Heart left ventricle (tissue), 16 donors: ENCODE measurements at regions of chr13 and their contacts with region 1.

Region 1: GRCh38 chr13:110715395-110716235 is 2.1 kb downstream of the ING1 start:
- DNase-seq: peak; percentile 98 to 99 (median 98)
- ATAC-seq: peak; percentile 76 to 84 (median 80)
- H3K4me3 ChIP-seq: peak overlapping the region; percentile 57 to 98 (median 95)
- H3K27ac ChIP-seq: peak overlapping the region; percentile 87 to 100 (median 100)
- H3K4me1 ChIP-seq: peaks cover 4 to 33% (median 27%) of the 10 kb centered on the region in 12 donors
- H3K27me3 ChIP-seq: no peaks in the 10 kb centered on the region
- CTCF ChIP-seq: peak in 7 of 12 donors; percentile 16 to 50 (median 30)
- POLR2A ChIP-seq: peak; percentile 54 to 80

Region 2: DNA sequence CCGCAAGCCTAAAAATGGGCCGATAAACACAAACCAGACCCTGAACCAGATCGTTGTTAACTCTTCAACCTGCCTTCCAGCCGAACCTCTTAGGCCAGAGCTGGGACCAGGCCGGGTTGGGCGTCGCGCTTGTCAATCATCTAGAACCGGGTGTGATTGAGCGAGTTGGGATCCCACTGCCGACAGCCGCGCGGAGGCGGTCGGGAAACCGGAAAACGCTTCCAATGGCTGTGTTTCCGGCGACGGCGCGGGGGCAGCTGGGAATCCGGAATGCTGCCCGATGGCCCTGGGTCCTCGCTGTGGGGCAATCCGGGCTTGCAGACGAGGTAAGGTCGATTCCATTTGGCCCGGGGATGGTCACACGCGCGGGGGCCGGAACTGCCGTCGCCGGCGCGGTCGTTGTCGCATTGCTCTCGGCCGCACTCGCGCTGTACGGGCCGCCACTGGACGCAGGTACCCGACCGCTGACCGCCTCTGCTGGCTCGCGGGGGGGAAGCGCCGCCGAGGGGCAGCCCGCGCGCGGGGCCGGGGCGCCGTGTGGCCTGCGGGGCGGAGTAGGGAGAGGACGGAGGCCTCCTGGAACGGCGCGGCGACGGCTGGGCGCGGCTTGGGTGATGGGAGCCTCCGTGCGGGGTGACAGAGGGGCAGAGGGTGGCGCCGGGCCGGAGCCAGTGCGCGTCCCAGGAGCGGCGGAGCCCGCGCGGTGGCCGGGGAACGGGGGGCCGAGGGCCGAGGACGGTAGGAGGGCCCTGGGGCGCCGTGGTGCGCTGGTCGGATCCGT is 100.1 kb before region 1 on chr13 and contains the start of gene NAXD:
- intact Hi-C with region 1: loop called in 3 of 10 experiments (anchors 5 kb)
- DNase-seq: peak; percentile 95 to 98 (median 96)
- ATAC-seq: peak; percentile 94 to 98 (median 95)
- H3K4me3 ChIP-seq: peak within 1 kb of the TSS; percentile 61 to 99 (median 84)
- H3K27ac ChIP-seq: peak within 1 kb of the TSS; percentile 74 to 99 (median 92)
- H3K4me1 ChIP-seq: peaks cover 0 to 47% (median 28%) of the 10 kb centered on the region in 12 donors
- H3K27me3 ChIP-seq: peaks cover 0 to 6% (median 0%) of the 10 kb centered on the region in 9 donors
- CTCF ChIP-seq: no peak
- POLR2A ChIP-seq: peak in 1 of 2 donors; percentile 77
- total RNA-seq, gene NAXD: 19.2 to 31.4 (median 25.0) TPM

Region 3: DNA sequence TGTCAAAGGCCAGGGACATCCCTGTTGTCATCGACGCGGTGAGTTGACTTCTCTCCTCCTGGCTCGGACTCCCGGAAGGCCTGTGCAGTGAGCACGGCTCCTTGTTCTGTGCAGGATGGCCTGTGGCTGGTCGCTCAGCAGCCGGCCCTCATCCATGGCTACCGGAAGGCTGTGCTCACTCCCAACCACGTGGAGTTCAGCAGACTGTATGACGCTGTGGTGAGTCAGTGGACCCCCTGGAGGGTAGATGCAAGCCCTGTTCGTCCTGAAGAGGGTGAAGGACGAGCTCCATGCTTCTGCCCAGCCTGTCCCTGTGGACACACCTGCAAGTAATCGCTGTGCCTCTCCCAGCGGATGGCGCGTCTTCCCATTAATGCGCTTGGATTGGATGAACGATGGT is 81.1 kb before region 1 on chr13:
- intact Hi-C with region 1: loop called in 1 of 10 experiments (anchors 5 kb)
- DNase-seq: no peak
- ATAC-seq: no peak
- H3K4me3 ChIP-seq: no peak overlapping the region
- H3K27ac ChIP-seq: no peak overlapping the region
- H3K4me1 ChIP-seq: peaks cover 0 to 13% (median 3%) of the 10 kb centered on the region in 12 donors
- H3K27me3 ChIP-seq: no peaks in the 10 kb centered on the region
- CTCF ChIP-seq: no peak
- POLR2A ChIP-seq: no peak

Region 4: GRCh38 chr13:110874508-110874960 is 158.9 kb after region 1 on chr13:
- intact Hi-C with region 1: loop called in 2 of 10 experiments (anchors 5 kb)
- DNase-seq: peak; percentile 89 to 92 (median 91)
- ATAC-seq: peak; percentile 64 to 85 (median 76)
- H3K4me3 ChIP-seq: peak overlapping the region in 11 of 12 donors; percentile 21 to 55 (median 44)
- H3K27ac ChIP-seq: peak overlapping the region in 2 of 12 donors; percentile 47
- H3K4me1 ChIP-seq: peaks cover 7 to 37% (median 23%) of the 10 kb centered on the region in 12 donors
- H3K27me3 ChIP-seq: no peaks in the 10 kb centered on the region
- CTCF ChIP-seq: no peak
- POLR2A ChIP-seq: no peak

Region 5: DNA sequence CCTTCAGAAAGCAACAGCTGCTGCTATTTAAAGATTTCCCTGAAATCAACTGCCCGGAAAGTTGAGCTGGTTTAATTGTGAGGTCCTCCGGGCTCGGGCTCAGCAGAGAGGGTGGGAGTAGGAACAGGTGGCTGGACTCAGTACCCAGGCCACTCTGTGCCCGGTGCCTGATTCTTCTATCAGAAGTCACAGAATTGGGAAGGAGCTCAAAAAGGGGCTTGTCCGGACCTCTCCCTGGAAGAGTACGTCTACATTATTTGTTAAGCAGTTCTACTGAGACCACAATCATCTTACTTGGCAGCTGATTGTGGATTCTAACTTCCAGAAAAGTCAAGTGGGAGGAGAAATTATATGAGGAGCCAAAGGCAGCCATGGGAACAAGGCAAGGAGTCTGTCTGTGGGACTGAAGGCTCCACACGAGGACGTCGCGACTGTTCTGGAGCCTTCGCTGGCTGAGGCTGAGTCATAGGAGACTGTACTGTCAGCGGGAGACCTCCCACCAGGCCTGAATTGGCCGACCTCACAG is 291.0 kb after region 1 on chr13:
- intact Hi-C with region 1: loop called in 1 of 10 experiments (anchors 2 kb)
- DNase-seq: peak; percentile 84 to 92 (median 88)
- ATAC-seq: peak; percentile 93 to 97 (median 96)
- H3K4me3 ChIP-seq: peak overlapping the region in 4 of 12 donors; percentile 1 to 15 (median 5)
- H3K27ac ChIP-seq: peak overlapping the region; percentile 70 to 93 (median 88)
- H3K4me1 ChIP-seq: peaks cover 3 to 37% (median 23%) of the 10 kb centered on the region in 12 donors
- H3K27me3 ChIP-seq: no peaks in the 10 kb centered on the region
- CTCF ChIP-seq: no peak
- POLR2A ChIP-seq: no peak

Region 6: GRCh38 chr13:111095031-111095840 is 379.6 kb after region 1 on chr13:
- intact Hi-C with region 1: no loop called
- DNase-seq: peak in 1 of 5 donors; percentile 51
- ATAC-seq: peak in 1 of 4 donors; percentile 13
- H3K4me3 ChIP-seq: no peak overlapping the region
- H3K27ac ChIP-seq: no peak overlapping the region
- H3K4me1 ChIP-seq: peaks cover 0 to 3% (median 0%) of the 10 kb centered on the region in 12 donors
- H3K27me3 ChIP-seq: peaks cover 0 to 36% (median 0%) of the 10 kb centered on the region in 9 donors
- CTCF ChIP-seq: no peak
- POLR2A ChIP-seq: no peak